ENCODE measurements at regions of chr10 and their contacts with region 1.

Region 1: DNA sequence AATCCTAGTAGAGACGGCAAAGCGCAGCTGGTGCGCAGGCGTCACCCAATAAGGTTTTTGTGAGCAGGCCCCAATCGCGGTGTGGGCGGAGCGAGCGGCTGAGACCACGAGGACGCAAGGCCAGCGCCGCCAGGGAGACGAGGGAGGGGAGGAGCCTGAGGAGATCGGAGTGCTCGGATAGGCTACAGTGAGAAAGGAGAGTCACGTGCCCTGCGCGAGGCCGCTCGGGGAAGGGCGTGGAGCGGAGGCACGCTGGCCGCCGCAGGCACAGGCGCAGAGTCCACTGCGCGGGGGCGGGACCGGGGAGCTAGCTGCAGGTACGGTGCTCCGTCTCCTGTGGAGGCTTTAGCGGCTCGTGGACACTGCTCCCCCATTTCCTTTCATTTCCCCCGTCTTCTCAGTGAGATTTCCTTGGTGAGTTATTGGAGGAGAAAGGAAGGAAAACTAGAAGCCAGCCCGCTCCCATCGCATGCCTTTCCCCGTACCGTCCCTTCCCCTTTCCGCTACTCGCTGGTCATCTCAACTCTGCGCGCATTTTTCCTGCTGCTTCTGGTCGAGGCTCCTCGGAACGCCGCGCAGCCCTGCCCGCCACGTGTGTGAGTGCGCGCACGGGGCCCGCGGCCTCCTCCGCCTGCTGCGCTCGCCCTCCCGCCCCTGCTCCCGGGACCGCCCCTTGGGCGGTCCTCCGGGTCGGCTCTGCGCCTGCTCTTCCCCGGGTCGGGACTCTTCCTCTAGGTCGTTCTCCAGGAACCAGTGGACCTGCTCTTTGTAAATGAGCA is at the start of gene THNSL1:
- DNase-seq: peak; percentile 99
- H3K4me3 ChIP-seq: peak within 1 kb of the TSS; percentile 50 to 71 (median 66)
- H3K27ac ChIP-seq: peak within 1 kb of the TSS; percentile 99
- H3K4me1 ChIP-seq: peaks cover 10% of the 10 kb centered on the region
- H3K27me3 ChIP-seq: no peaks in the 10 kb centered on the region
- CTCF ChIP-seq: no peak
- total RNA-seq, gene THNSL1: 2.3 to 3.4 TPM

Region 2: GRCh38 chr10:24920907-24921881 is 95.4 kb before region 1 on chr10:
- CTCF ChIA-PET with region 1: no interaction called
- dilution Hi-C with region 1: no loop called
- in situ Hi-C with region 1: no loop called
- intact Hi-C with region 1: no loop called
- DNase-seq: peak; percentile 86
- H3K4me3 ChIP-seq: no peak overlapping the region
- H3K27ac ChIP-seq: peak overlapping the region; percentile 42
- H3K4me1 ChIP-seq: peaks cover 5% of the 10 kb centered on the region
- H3K27me3 ChIP-seq: no peaks in the 10 kb centered on the region
- CTCF ChIP-seq: no peak

Region 3: GRCh38 chr10:24958091-24958720 is 58.4 kb before region 1 on chr10:
- CTCF ChIA-PET with region 1: no interaction called
- dilution Hi-C with region 1: loop called (anchors 5 kb)
- in situ Hi-C with region 1: no loop called
- intact Hi-C with region 1: no loop called
- DNase-seq: peak; percentile 90
- H3K4me3 ChIP-seq: no peak overlapping the region
- H3K27ac ChIP-seq: peak overlapping the region; percentile 90
- H3K4me1 ChIP-seq: peaks cover 32% of the 10 kb centered on the region
- H3K27me3 ChIP-seq: no peaks in the 10 kb centered on the region
- CTCF ChIP-seq: no peak

Region 4: DNA sequence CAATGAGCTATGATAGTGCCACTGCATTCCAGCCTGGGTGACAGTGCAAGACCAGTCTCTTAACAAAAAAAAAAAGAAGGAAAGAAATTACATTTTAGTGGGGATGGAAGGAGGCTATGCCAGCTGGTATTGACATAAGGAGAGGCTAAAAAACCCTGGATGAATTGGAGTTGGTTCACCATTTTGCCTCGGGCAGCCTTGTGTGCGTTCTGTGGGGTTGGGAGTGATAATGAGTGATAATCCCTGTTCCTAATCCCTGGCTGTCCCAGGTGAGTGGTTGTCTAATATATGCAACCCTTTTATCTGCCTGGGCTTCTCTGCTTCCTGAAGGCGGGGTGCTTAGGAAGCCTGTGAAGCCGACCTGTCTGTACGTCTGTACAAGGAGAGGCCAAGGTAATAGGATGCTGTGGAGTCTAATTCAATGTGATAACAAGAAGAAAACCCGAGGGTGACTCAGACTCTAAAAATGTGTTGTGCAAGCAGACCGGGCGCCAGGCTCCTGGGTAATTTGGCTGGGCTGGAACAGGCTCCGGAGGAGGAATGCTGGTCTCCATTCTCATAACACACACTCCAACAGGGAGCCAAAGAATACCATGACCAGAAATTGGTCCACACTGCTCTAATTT is 43.3 kb after region 1 on chr10:
- CTCF ChIA-PET with region 1: no interaction called
- dilution Hi-C with region 1: loop called (anchors 5 kb)
- in situ Hi-C with region 1: loop called in 1 of 2 experiments (anchors 5 kb)
- intact Hi-C with region 1: no loop called
- DNase-seq: peak; percentile 91
- H3K4me3 ChIP-seq: no peak overlapping the region
- H3K27ac ChIP-seq: peak overlapping the region; percentile 73
- H3K4me1 ChIP-seq: peaks cover 33% of the 10 kb centered on the region
- H3K27me3 ChIP-seq: no peaks in the 10 kb centered on the region
- CTCF ChIP-seq: no peak

Region 5: GRCh38 chr10:25068152-25069058 is 51.8 kb after region 1 on chr10:
- CTCF ChIA-PET with region 1: interaction called, 3 read pairs
- dilution Hi-C with region 1: loop called (anchors 5 kb)
- in situ Hi-C with region 1: loop called in 1 of 2 experiments (anchors 5 kb)
- intact Hi-C with region 1: loop called (anchors 1 kb)
- DNase-seq: peak; percentile 100
- H3K4me3 ChIP-seq: no peak overlapping the region
- H3K27ac ChIP-seq: peak overlapping the region; percentile 100
- H3K4me1 ChIP-seq: peaks cover 18% of the 10 kb centered on the region
- H3K27me3 ChIP-seq: no peaks in the 10 kb centered on the region
- CTCF ChIP-seq: no peak

Region 6: GRCh38 chr10:25174461-25175230 is 158.1 kb after region 1 on chr10 and contains the start of gene GPR158:
- CTCF ChIA-PET with region 1: no interaction called
- dilution Hi-C with region 1: no loop called
- in situ Hi-C with region 1: no loop called
- intact Hi-C with region 1: no loop called
- DNase-seq: peak; percentile 91
- H3K4me3 ChIP-seq: peak within 1 kb of the TSS; percentile 48 to 51 (median 51)
- H3K27ac ChIP-seq: no peak within 1 kb of the TSS
- H3K4me1 ChIP-seq: peaks cover 5% of the 10 kb centered on the region
- H3K27me3 ChIP-seq: peaks cover 38% of the 10 kb centered on the region
- CTCF ChIP-seq: no peak
- total RNA-seq, gene GPR158: not detected

Measured in mammary epithelial cell (primary cell).